HCT116 (cell line): ENCODE measurements at regions of chr2 and their contacts with region 1.

Region 1: DNA sequence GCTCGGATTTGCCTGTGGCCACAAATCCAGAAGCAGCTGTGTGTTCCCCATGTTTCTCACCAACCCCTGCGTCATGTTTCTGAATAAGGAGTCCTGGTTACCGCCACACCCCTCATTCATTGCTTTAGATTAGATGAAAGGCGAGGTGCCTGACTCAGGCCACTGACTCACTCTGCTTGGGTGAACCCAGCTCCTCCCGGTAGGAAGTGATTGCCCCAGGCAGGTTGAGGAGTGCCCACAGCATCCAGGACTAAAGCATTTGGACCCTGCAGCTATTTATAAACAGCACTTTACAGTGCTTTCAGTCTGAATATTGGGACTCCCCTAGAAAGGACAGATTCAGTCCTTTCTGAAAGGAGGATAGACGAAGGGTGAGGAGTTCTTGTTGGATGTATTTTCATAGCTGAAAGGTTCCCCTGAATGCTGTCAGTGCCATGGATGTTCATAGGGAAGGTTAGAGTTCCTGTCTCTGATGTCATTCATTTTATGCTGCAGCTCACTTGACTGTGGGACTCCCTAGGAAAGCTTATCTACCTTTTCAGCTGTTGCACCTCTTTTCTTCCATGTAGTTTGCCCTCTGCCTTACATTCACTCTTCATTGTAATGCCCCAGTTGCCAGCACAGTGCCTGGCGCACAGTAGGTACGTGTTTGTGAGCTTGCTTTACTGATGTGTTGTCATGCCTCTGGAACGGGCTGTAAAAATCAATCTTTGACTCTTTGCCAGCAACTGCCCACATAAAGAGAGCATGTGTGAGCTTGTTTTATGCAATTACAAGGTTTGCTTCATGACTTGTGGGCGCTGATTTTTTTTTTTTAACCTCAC is 14.9 kb downstream of the ITGA6 start:
- DNase-seq: peak; percentile 98
- ATAC-seq: peak; percentile 87
- H3K4me3 ChIP-seq: peak overlapping the region; percentile 13 to 41
- H3K27ac ChIP-seq: peak overlapping the region; percentile 82
- H3K4me1 ChIP-seq: peaks cover 78 to 97% of the 10 kb centered on the region in 2 experiments
- H3K27me3 ChIP-seq: no peaks in the 10 kb centered on the region
- CTCF ChIP-seq: no peak
- POLR2A ChIP-seq: no peak
- RAD21 ChIP-seq: peak; percentile 44

Region 2: DNA sequence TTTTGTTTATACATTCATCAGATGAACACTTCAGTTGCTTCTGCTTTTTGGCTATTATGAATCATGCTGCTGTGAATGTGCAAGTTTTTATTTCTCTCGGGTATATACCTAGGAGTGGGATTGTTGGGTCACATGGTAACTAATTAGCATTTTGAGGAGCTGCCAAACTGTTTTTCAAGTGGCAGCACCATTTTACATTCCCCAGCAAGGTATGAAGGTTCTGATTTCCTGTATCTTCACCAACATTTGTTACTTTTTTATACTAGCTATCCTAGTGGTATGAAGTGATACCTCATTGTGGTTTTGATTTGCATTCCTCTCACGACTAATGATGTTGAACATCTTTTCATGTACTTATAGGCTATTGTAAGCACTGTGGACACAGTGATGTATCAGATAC is 701.1 kb before region 1 on chr2:
- CTCF ChIA-PET with region 1: no interaction called
- POLR2A ChIA-PET with region 1: no interaction called
- RAD21 ChIA-PET with region 1: no interaction called
- intact Hi-C with region 1: no loop called
- DNase-seq: no peak
- ATAC-seq: no peak
- H3K4me3 ChIP-seq: no peak overlapping the region
- H3K27ac ChIP-seq: no peak overlapping the region
- H3K4me1 ChIP-seq: no peaks in the 10 kb centered on the region
- H3K27me3 ChIP-seq: no peaks in the 10 kb centered on the region
- CTCF ChIP-seq: no peak
- POLR2A ChIP-seq: no peak
- RAD21 ChIP-seq: no peak

Region 3: DNA sequence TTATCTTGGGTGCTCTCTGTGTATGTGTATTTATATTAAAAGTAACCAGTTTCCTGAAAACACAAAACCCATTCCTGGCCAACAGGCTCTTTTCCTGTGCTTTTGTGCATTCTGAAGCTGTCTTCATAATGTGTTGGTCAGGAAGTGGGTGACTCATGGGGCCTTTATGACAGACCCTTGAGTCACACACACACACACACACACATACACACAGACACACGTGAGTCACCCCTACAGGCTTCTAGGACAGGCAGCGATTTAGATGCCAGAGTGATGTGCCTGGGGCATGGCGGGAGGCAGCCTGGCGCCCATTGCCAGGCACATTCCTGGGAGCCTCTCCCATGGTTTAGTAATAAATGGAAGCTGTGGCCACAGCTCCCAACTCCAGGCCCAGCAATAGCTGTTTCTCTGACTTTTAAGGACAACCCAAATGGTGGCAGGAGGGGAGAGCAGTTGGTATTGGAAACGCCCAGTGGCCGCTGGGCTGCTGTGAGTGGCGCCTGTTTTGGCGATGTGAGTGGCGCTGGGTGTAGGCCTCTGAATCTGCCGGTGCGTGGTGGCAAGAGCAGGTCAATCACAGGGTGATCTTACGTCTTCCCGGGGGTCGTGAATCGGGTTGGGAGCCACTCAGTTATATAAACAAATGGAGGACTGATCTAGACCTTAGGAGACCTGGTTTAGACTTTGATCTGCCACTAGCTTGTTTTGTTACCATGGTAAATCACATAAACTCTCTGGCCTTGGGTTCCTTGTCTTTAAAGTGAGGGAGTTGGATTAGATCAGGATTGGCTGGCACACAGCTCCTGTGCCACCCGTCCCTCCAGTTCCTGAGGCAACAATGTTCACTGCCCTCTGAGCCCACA is 188.9 kb before region 1 on chr2:
- CTCF ChIA-PET with region 1: no interaction called
- POLR2A ChIA-PET with region 1: interaction called, 39 read pairs
- RAD21 ChIA-PET with region 1: interaction called, 3 to 7 read pairs
- intact Hi-C with region 1: loop called (anchors 5 kb)
- DNase-seq: peak; percentile 100
- ATAC-seq: peak; percentile 77
- H3K4me3 ChIP-seq: peak overlapping the region in 1 of 2 experiments; percentile 40
- H3K27ac ChIP-seq: peak overlapping the region; percentile 96
- H3K4me1 ChIP-seq: peaks cover 64 to 86% of the 10 kb centered on the region in 2 experiments
- H3K27me3 ChIP-seq: no peaks in the 10 kb centered on the region
- CTCF ChIP-seq: 0 out of 6 replicates have a peak, but pooled peaks of 1 of the 3 experiments have one; percentile 8
- POLR2A ChIP-seq: peak; percentile 50
- RAD21 ChIP-seq: no peak

Region 4: GRCh38 chr2:172295677-172296076 is 146.6 kb before region 1 on chr2:
- CTCF ChIA-PET with region 1: no interaction called
- POLR2A ChIA-PET with region 1: no interaction called
- RAD21 ChIA-PET with region 1: interaction called in 1 of 2 experiments, 10 read pairs
- intact Hi-C with region 1: no loop called
- DNase-seq: no peak
- ATAC-seq: no peak
- H3K4me3 ChIP-seq: no peak overlapping the region
- H3K27ac ChIP-seq: no peak overlapping the region
- H3K4me1 ChIP-seq: no peaks in the 10 kb centered on the region
- H3K27me3 ChIP-seq: no peaks in the 10 kb centered on the region
- CTCF ChIP-seq: no peak
- POLR2A ChIP-seq: no peak
- RAD21 ChIP-seq: no peak

Region 5: GRCh38 chr2:172389685-172390339 is 52.5 kb before region 1 on chr2:
- CTCF ChIA-PET with region 1: no interaction called
- POLR2A ChIA-PET with region 1: no interaction called
- RAD21 ChIA-PET with region 1: no interaction called
- intact Hi-C with region 1: no loop called
- DNase-seq: no peak
- ATAC-seq: no peak
- H3K4me3 ChIP-seq: no peak overlapping the region
- H3K27ac ChIP-seq: no peak overlapping the region
- H3K4me1 ChIP-seq: no peaks in the 10 kb centered on the region
- H3K27me3 ChIP-seq: no peaks in the 10 kb centered on the region
- CTCF ChIP-seq: no peak
- POLR2A ChIP-seq: no peak
- RAD21 ChIP-seq: no peak

Region 6: DNA sequence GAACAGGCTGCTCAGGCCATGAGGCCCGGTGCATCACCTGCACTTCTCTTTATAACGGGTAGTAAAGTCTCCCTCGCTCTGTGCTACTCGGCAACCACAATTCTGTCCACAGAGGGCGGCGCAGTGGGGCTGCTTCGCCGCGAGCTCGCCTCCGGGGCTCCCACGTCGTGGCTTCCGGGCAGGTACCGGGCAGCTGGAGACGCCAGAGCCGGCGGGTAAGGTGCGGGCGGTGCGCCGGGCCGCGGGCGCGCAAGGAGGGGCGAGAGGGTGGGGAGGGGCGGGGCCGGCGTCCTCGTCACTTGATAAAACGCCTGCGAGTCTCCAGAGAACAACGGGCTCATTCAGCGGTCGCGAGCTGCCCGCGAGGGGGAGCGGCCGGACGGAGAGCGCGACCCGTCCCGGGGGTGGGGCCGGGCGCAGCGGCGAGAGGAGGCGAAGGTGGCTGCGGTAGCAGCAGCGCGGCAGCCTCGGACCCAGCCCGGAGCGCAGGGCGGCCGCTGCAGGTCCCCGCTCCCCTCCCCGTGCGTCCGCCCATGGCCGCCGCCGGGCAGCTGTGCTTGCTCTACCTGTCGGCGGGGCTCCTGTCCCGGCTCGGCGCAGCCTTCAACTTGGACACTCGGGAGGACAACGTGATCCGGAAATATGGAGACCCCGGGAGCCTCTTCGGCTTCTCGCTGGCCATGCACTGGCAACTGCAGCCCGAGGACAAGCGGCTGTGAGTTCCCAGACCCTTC is 14.9 kb before region 1 on chr2 and contains the start of gene ITGA6:
- CTCF ChIA-PET with region 1: interaction called, 10 read pairs
- POLR2A ChIA-PET with region 1: interaction called, 56 read pairs
- RAD21 ChIA-PET with region 1: no interaction called
- intact Hi-C with region 1: loop called (anchors 2 kb)
- DNase-seq: peak; percentile 83
- ATAC-seq: peak; percentile 85
- H3K4me3 ChIP-seq: peak within 1 kb of the TSS; percentile 60 to 73
- H3K27ac ChIP-seq: peak within 1 kb of the TSS; percentile 84
- H3K4me1 ChIP-seq: peaks cover 31 to 48% of the 10 kb centered on the region in 2 experiments
- H3K27me3 ChIP-seq: no peaks in the 10 kb centered on the region
- CTCF ChIP-seq: peak in 1 of 3 experiments; percentile 13; a peak in 1 of 6 replicates
- POLR2A ChIP-seq: peak; percentile 94
- RAD21 ChIP-seq: peak; percentile 46
- total RNA-seq, gene ITGA6: 93.1 TPM